Natural killer cell (primary cell): ENCODE measurements at regions of chrX and their contacts with region 1.

Region 1: GRCh38 chrX:79412972-79413371 is 45.8 kb upstream of the ITM2A start:
- DNase-seq: peak in 1 of 2 donors; percentile 66
- ATAC-seq: no peak
- H3K4me3 ChIP-seq: peak overlapping the region; percentile 10
- H3K4me3 Mint-ChIP-seq: peak overlapping the region; percentile 70
- H3K27ac ChIP-seq: no peak overlapping the region
- H3K27ac Mint-ChIP-seq: no peak overlapping the region
- H3K4me1 ChIP-seq: no peaks in the 10 kb centered on the region
- H3K4me1 Mint-ChIP-seq: peaks cover 23% of the 10 kb centered on the region in 2 donors
- H3K27me3 ChIP-seq: no peaks in the 10 kb centered on the region
- H3K27me3 Mint-ChIP-seq: peaks cover 0 to 19% of the 10 kb centered on the region in 2 donors
- CTCF ChIP-seq: peak; percentile 51

Region 2: GRCh38 chrX:79270401-79270800 is 142.6 kb before region 1 on chrX:
- intact Hi-C with region 1: loop called (anchors 5 kb)
- DNase-seq: peak; percentile 42 to 86
- ATAC-seq: peak; percentile 84 to 98 (median 91)
- H3K4me3 ChIP-seq: no peak overlapping the region
- H3K4me3 Mint-ChIP-seq: no peak overlapping the region
- H3K27ac ChIP-seq: no peak overlapping the region
- H3K27ac Mint-ChIP-seq: peak overlapping the region in 1 of 2 donors; percentile 61
- H3K4me1 ChIP-seq: peaks cover 2% of the 10 kb centered on the region
- H3K4me1 Mint-ChIP-seq: peaks cover 20 to 29% of the 10 kb centered on the region in 2 donors
- H3K27me3 ChIP-seq: no peaks in the 10 kb centered on the region
- H3K27me3 Mint-ChIP-seq: peaks cover 0 to 8% of the 10 kb centered on the region in 2 donors
- CTCF ChIP-seq: peak; percentile 72

Region 3: GRCh38 chrX:79325263-79325958 is 87.6 kb before region 1 on chrX:
- intact Hi-C with region 1: no loop called
- DNase-seq: peak in 1 of 2 donors; percentile 70
- ATAC-seq: peak; percentile 66 to 75 (median 69)
- H3K4me3 ChIP-seq: no peak overlapping the region
- H3K4me3 Mint-ChIP-seq: peak overlapping the region; percentile 40
- H3K27ac ChIP-seq: peak overlapping the region; percentile 29
- H3K27ac Mint-ChIP-seq: peak overlapping the region; percentile 72 to 81
- H3K4me1 ChIP-seq: peaks cover 8% of the 10 kb centered on the region
- H3K4me1 Mint-ChIP-seq: peaks cover 0 to 8% of the 10 kb centered on the region in 2 donors
- H3K27me3 ChIP-seq: no peaks in the 10 kb centered on the region
- H3K27me3 Mint-ChIP-seq: peaks cover 0 to 13% of the 10 kb centered on the region in 2 donors
- CTCF ChIP-seq: no peak

Region 4: GRCh38 chrX:79366873-79367749 is 45.9 kb before region 1 on chrX and contains the start of gene ITM2A:
- intact Hi-C with region 1: loop called (anchors 2 kb)
- DNase-seq: peak; percentile 37 to 80
- ATAC-seq: peak; percentile 80 to 90 (median 83)
- H3K4me3 ChIP-seq: peak within 1 kb of the TSS; percentile 69
- H3K4me3 Mint-ChIP-seq: peak within 1 kb of the TSS; percentile 93
- H3K27ac ChIP-seq: peak within 1 kb of the TSS; percentile 81
- H3K27ac Mint-ChIP-seq: peak within 1 kb of the TSS; percentile 86
- H3K4me1 ChIP-seq: peaks cover 8% of the 10 kb centered on the region
- H3K4me1 Mint-ChIP-seq: peaks cover 29% of the 10 kb centered on the region in 2 donors
- H3K27me3 ChIP-seq: no peaks in the 10 kb centered on the region
- H3K27me3 Mint-ChIP-seq: peaks cover 0 to 7% of the 10 kb centered on the region in 2 donors
- CTCF ChIP-seq: no peak
- total RNA-seq, gene ITM2A: 34.7 to 72.5 (median 64.8) TPM

Region 5: DNA sequence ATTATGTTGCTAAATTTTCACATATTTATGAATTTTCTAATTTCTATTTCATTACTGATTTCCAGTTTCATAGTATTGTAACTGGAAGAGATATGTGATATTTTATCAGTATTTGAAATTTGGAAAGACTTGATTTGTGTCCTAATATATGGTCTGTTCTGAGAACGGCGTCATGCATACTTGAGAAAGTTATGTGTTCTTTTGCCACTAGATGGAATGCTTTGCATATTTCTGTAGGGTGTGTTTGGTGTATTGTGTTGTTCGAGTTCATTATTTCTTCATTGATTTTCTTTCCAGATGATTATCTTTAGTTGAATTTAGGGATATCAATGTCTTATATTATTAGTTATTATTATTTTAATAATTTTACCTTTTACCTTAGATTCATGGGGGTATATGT is 64.7 kb after region 1 on chrX:
- intact Hi-C with region 1: no loop called
- DNase-seq: no peak
- ATAC-seq: no peak
- H3K4me3 ChIP-seq: no peak overlapping the region
- H3K4me3 Mint-ChIP-seq: no peak overlapping the region
- H3K27ac ChIP-seq: no peak overlapping the region
- H3K27ac Mint-ChIP-seq: no peak overlapping the region
- H3K4me1 ChIP-seq: no peaks in the 10 kb centered on the region
- H3K4me1 Mint-ChIP-seq: no peaks in the 10 kb centered on the region
- H3K27me3 ChIP-seq: no peaks in the 10 kb centered on the region
- H3K27me3 Mint-ChIP-seq: peaks cover 3 to 62% of the 10 kb centered on the region in 2 donors
- CTCF ChIP-seq: no peak

Region 6: GRCh38 chrX:79601341-79602131 is 188.6 kb after region 1 on chrX:
- intact Hi-C with region 1: no loop called
- DNase-seq: no peak
- ATAC-seq: no peak
- H3K4me3 ChIP-seq: no peak overlapping the region
- H3K4me3 Mint-ChIP-seq: no peak overlapping the region
- H3K27ac ChIP-seq: no peak overlapping the region
- H3K27ac Mint-ChIP-seq: no peak overlapping the region
- H3K4me1 ChIP-seq: no peaks in the 10 kb centered on the region
- H3K4me1 Mint-ChIP-seq: no peaks in the 10 kb centered on the region
- H3K27me3 ChIP-seq: no peaks in the 10 kb centered on the region
- H3K27me3 Mint-ChIP-seq: no peaks in the 10 kb centered on the region
- CTCF ChIP-seq: no peak